PC-3 (cell line): ENCODE measurements at regions of chr7 and their contacts with region 1.

Region 1: GRCh38 chr7:83677180-83677866 is 28.4 kb upstream of the SEMA3E start:
- DNase-seq: peak; percentile 98
- ATAC-seq: peak; percentile 97
- H3K4me3 ChIP-seq: peak overlapping the region; percentile 22; the same call in 1 of the 2 replicates
- H3K27ac ChIP-seq: peak overlapping the region; percentile 71
- H3K4me1 ChIP-seq: peaks cover 16% of the 10 kb centered on the region
- H3K27me3 ChIP-seq: no peaks in the 10 kb centered on the region
- CTCF ChIP-seq: no peak

Region 2: GRCh38 chr7:83824214-83824613 is 146.9 kb after region 1 on chr7:
- CTCF ChIA-PET with region 1: no interaction called
- POLR2A ChIA-PET with region 1: no interaction called
- intact Hi-C with region 1: loop called (anchors 2 kb)
- DNase-seq: peak; percentile 81
- ATAC-seq: peak; percentile 93
- H3K4me3 ChIP-seq: no peak overlapping the region
- H3K27ac ChIP-seq: peak overlapping the region; percentile 81
- H3K4me1 ChIP-seq: peaks cover 31% of the 10 kb centered on the region
- H3K27me3 ChIP-seq: no peaks in the 10 kb centered on the region
- CTCF ChIP-seq: no peak